ENCODE measurements at regions of chr9 and their contacts with region 1.

Region 1: DNA sequence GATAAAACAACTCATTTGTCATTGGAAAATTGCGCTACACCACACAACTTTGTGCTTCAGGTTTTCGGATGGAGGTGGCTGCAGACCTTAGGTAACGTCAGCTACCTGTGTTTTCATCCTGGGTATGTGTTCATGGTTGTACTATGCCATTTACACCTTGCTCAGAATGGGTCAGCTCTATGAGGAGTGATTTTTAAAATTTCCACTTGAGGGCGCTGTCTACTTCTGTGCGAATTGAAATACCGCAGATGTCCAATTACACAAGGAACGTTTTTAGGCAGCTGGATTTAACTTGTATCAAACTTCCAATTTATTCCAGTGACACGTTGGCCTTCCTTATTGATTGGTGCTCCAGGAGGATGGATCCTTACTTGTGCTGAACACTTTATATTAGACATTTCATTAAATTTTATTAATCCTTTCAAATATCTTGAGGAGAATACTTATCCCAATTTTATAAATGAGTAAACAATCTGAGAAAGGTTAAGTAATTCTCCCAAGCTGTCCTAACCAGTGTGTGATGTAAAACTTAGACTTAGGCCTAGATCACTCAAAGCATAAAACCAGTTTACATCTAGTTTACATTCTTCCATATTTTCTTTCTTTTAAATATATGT is 23.4 kb downstream of the DMRTA1 start:
- DNase-seq: peak; percentile 3
- ATAC-seq: peak; percentile 81
- H3K4me3 ChIP-seq: no peak overlapping the region
- H3K27ac ChIP-seq: no peak overlapping the region
- H3K4me1 ChIP-seq: no peaks in the 10 kb centered on the region
- H3K27me3 ChIP-seq: no peaks in the 10 kb centered on the region
- CTCF ChIP-seq: peak; percentile 52 to 64 (median 60); a peak in 5 of 6 replicates
- EP300 ChIP-seq: no peak
- POLR2A ChIP-seq: no peak
- RAD21 ChIP-seq: peak; percentile 75

Region 2: DNA sequence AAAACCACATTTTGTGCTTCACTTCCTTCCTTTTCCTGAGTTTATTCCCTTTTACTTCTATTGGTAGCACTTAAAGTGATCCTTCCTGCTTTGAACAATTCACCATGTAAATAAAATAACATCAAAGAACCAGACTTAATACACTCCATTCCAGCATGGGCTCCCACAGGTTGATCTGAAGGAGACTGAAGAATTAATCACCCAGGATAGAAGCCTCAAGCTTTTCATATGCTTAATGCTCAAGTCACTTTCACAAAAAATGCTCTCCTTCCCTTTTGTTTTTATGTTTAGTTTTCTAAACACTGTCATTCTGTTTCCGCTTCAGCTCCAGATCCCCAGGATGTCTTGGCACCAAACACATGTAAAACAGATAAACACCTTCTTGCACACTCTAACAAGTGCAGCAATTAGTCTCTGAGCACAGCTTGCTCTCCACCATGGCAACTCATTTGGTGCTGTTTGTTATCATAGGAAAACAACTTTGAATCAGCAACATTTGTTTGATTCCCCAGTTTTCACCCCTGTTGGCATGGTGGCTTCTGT is 13.6 kb after region 1 on chr9:
- CTCF ChIA-PET with region 1: interaction called, 11 read pairs
- POLR2A ChIA-PET with region 1: no interaction called
- RAD21 ChIA-PET with region 1: no interaction called
- SMC1A ChIA-PET with region 1: interaction called, 4 read pairs
- in situ Hi-C with region 1: no loop called
- intact Hi-C with region 1: no loop called
- DNase-seq: no peak
- ATAC-seq: no peak
- H3K4me3 ChIP-seq: no peak overlapping the region
- H3K27ac ChIP-seq: no peak overlapping the region
- H3K4me1 ChIP-seq: no peaks in the 10 kb centered on the region
- H3K27me3 ChIP-seq: no peaks in the 10 kb centered on the region
- CTCF ChIP-seq: no peak
- EP300 ChIP-seq: no peak
- POLR2A ChIP-seq: no peak
- RAD21 ChIP-seq: no peak

Measured in GM12878 (cell line).